ENCODE measurements at regions of chr4 and their contacts with region 1.

Region 1: GRCh38 chr4:145907390-145907789 is 31.2 kb downstream of the ZNF827 start:
- DNase-seq: no peak
- H3K4me3 ChIP-seq: no peak overlapping the region
- H3K27ac ChIP-seq: no peak overlapping the region
- H3K4me1 ChIP-seq: no peaks in the 10 kb centered on the region
- H3K27me3 ChIP-seq: no peaks in the 10 kb centered on the region
- CTCF ChIP-seq: no peak

Region 2: GRCh38 chr4:145930592-145930991 is 23.2 kb after region 1 on chr4:
- intact Hi-C with region 1: loop called (anchors 2 kb)
- DNase-seq: no peak
- H3K4me3 ChIP-seq: no peak overlapping the region
- H3K27ac ChIP-seq: no peak overlapping the region
- H3K4me1 ChIP-seq: no peaks in the 10 kb centered on the region
- H3K27me3 ChIP-seq: no peaks in the 10 kb centered on the region
- CTCF ChIP-seq: no peak

Measured in colonic mucosa (tissue), 4 donors.